Left colon (tissue), 2 donors: ENCODE measurements at regions of chr10 and their contacts with region 1.

Region 1: GRCh38 chr10:67764012-67764822 is 68.2 kb upstream of the CTNNA3 start:
- DNase-seq: peak; percentile 90 to 94
- ATAC-seq: peak; percentile 88

Region 2: DNA sequence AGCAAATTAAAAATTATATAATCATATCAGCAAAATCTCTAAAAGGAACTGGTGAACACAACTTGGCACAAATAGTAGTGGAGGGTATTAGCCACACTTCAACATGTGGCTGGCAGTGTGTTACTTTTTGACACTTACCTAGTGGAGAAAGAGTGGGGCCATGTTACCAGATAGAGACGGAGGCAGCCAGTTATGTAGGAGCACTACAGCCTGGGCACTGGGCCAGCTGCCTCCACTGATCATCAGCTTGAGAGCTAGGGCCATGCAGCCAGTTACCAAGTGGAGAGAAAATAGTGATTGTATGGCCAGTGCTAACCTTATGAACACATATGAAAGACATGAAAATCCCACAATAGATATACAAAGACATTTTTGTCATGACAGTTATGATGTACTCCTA is 311.3 kb before region 1 on chr10:
- intact Hi-C with region 1: no loop called
- DNase-seq: no peak
- ATAC-seq: no peak

Region 3: DNA sequence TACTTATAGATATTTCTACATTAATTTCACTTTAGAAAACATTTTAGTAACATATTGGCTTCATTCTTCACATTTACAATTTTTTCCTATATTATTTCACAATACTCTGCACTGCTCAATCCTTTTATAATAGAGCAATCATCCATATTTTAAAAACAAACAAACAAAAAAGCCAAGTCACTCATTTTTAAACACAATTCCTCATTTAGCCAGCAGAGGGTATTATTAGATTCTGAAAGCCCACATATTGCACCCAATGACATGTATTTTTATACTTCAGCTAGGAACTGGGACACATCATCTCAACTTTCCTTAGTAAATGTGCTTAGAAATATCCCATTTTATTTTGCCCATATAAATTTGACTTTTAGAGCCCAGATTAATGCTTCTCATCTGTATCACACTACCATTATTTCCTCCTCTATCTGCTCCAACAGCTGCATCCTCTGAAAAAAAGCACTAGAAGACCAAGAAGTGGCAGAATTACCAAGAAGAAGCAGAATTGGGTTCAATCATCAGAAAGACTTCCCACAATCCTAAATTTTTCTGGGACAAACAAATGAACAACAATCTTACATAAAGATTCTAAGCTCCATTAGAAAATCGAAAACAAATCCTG is 97.7 kb before region 1 on chr10:
- intact Hi-C with region 1: no loop called
- DNase-seq: no peak
- ATAC-seq: no peak

Region 4: GRCh38 chr10:67697724-67698131 is 66.5 kb before region 1 on chr10:
- intact Hi-C with region 1: loop called in 1 of 2 experiments (anchors 5 kb)
- DNase-seq: peak in 1 of 2 donors; percentile 11
- ATAC-seq: peak; percentile 73